Heart left ventricle (tissue), 16 donors: ENCODE measurements at regions of chr18 and their contacts with region 1.

Region 1: DNA sequence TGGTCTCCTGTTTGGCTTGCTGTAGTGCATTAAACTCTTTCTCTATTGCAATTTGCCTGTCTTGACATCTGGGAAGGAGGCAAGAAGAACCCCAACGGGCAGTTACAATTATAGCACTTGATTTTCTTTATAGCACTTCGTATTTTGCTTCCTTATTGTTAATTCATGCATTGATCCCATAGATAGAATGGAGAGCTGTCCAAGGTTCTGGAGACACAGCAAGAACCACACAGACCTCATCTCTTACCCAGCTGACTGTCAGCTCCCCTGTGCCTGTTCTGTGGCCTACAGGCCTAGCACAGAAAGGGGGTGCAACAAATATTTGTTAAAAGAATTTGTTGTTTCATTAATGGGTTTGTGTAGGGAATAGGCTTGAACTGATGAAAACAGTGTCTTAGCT is 194.3 kb downstream of the GALNT1 start:
- DNase-seq: no peak
- ATAC-seq: no peak
- H3K4me3 ChIP-seq: no peak overlapping the region
- H3K27ac ChIP-seq: no peak overlapping the region
- H3K4me1 ChIP-seq: peaks cover 0 to 5% (median 0%) of the 10 kb centered on the region in 12 donors
- H3K27me3 ChIP-seq: peaks cover 0 to 3% (median 0%) of the 10 kb centered on the region in 9 donors
- CTCF ChIP-seq: no peak
- POLR2A ChIP-seq: no peak

Region 2: DNA sequence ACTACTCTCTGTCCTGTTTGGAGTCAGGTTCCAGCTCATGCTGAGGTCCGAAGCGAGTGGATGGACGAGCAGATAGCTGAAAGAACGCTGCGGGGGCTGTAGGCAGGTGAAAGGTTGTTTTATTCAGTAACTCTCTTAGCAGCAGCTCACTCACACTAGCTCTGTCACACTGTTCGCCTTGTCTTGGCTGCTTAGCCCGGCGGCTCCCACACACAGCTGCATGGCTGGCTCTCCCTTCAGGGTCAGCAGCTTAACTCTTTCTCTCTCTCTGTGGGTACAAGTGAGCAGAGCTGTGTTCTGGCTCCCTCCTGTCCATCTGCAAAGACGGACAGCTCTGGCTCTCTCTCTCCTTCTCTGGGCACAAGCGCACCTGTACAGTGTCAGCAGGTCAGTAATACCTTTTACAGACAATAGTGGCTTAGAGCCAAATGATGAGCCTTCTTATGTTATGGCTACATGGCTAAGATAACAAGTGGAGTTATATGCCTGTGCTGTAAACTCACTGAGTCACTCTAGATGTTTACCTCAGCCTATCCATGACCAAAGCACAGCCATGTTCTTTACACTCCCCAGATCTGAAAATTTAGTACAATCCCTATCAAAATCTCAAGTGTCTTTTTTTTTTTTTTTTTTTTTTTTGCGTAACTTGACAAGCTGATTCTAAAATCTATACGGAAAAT is 45.1 kb before region 1 on chr18:
- intact Hi-C with region 1: no loop called
- DNase-seq: peak in 2 of 5 donors; percentile 32 to 43
- ATAC-seq: peak; percentile 52 to 81 (median 67)
- H3K4me3 ChIP-seq: peak overlapping the region in 2 of 12 donors; percentile 1 to 17
- H3K27ac ChIP-seq: peak overlapping the region in 2 of 12 donors; percentile 16 to 39
- H3K4me1 ChIP-seq: peaks cover 0 to 28% (median 17%) of the 10 kb centered on the region in 12 donors
- H3K27me3 ChIP-seq: no peaks in the 10 kb centered on the region
- CTCF ChIP-seq: no peak
- POLR2A ChIP-seq: no peak

Region 3: DNA sequence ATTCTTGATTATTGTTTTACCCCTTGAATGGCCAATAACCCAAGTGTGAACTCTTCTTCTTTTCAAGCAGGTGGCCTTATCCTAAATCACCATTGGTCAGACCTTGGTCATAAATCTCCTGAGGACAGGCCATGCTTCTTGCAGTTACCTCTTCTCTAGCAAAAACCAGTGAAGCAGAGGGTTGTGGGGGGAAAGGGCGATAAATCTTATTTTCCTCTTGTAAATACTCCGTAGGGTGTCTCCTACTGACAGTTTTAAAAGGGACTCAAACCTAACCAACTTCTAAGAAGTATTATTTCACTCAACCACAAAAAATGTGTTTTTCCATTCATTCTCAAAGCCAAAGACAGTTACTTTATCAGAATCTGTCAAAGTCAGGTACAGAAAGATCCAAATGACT is 28.5 kb after region 1 on chr18:
- intact Hi-C with region 1: loop called in 1 of 10 experiments (anchors 1 kb)
- DNase-seq: no peak
- ATAC-seq: no peak
- H3K4me3 ChIP-seq: no peak overlapping the region
- H3K27ac ChIP-seq: no peak overlapping the region
- H3K4me1 ChIP-seq: peaks cover 0 to 2% (median 0%) of the 10 kb centered on the region in 12 donors
- H3K27me3 ChIP-seq: no peaks in the 10 kb centered on the region
- CTCF ChIP-seq: no peak
- POLR2A ChIP-seq: no peak

Region 4: GRCh38 chr18:35811896-35812295 is 36.0 kb after region 1 on chr18:
- intact Hi-C with region 1: loop called in 1 of 10 experiments (anchors 5 kb)
- DNase-seq: no peak
- ATAC-seq: no peak
- H3K4me3 ChIP-seq: no peak overlapping the region
- H3K27ac ChIP-seq: no peak overlapping the region
- H3K4me1 ChIP-seq: peaks cover 0 to 2% (median 0%) of the 10 kb centered on the region in 12 donors
- H3K27me3 ChIP-seq: no peaks in the 10 kb centered on the region
- CTCF ChIP-seq: no peak
- POLR2A ChIP-seq: no peak

Region 5: GRCh38 chr18:35835833-35836232 is 59.9 kb after region 1 on chr18:
- intact Hi-C with region 1: loop called in 2 of 10 experiments (anchors 10 kb)
- DNase-seq: no peak
- ATAC-seq: no peak
- H3K4me3 ChIP-seq: no peak overlapping the region
- H3K27ac ChIP-seq: no peak overlapping the region
- H3K4me1 ChIP-seq: peaks cover 0 to 14% (median 0%) of the 10 kb centered on the region in 12 donors
- H3K27me3 ChIP-seq: no peaks in the 10 kb centered on the region
- CTCF ChIP-seq: no peak
- POLR2A ChIP-seq: no peak